PC-9 (cell line): ENCODE measurements at regions of chr22 and their contacts with region 1.

Region 1: DNA sequence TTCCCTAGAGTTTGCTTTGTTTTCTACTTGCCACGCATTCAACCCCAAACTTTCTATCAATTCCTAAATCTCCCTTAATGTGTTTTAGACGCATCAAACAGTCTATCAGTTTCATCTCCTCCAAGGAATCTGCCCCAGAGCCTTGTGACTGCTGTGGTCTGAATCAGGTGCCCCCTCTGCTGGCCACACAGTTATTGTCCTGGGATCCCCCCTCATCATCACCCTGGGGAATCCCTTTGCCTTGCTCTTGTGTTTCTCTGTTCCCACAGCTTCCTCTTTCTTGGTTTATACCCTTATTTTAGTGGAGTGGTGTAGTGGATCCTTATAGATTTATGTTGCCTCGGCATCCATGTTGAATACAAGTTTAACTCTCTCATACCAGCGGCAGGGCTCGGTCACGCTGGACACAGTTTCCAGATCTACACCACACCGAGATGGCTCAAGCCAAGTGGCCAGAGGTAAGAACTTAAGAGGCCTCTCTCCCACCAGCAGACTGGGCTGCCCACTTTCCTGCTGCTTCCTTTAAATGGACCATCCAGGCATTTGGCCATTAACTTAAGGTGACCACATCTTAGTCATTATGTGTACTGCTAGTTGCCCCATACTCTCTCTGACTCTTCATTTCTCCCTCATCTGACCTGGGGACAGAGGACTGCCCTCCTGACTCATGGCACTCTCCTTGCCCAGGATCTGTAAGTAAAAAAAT is 8.2 kb downstream of the UPB1 start:
- DNase-seq: peak; percentile 53 to 55
- H3K4me3 ChIP-seq: no peak overlapping the region
- H3K27ac ChIP-seq: no peak overlapping the region
- H3K4me1 ChIP-seq: peaks cover 59% of the 10 kb centered on the region
- H3K27me3 ChIP-seq: no peaks in the 10 kb centered on the region
- CTCF ChIP-seq: peak; percentile 74

Region 2: GRCh38 chr22:24423519-24424000 is 79.7 kb before region 1 on chr22:
- CTCF ChIA-PET with region 1: no interaction called
- POLR2A ChIA-PET with region 1: no interaction called
- intact Hi-C with region 1: loop called (anchors 1 kb)
- DNase-seq: peak in 1 of 2 experiments; percentile 57
- H3K4me3 ChIP-seq: peak overlapping the region; percentile 78; the same call in 1 of the 2 replicates
- H3K27ac ChIP-seq: no peak overlapping the region
- H3K4me1 ChIP-seq: no peaks in the 10 kb centered on the region
- H3K27me3 ChIP-seq: no peaks in the 10 kb centered on the region
- CTCF ChIP-seq: peak; percentile 75

Region 3: DNA sequence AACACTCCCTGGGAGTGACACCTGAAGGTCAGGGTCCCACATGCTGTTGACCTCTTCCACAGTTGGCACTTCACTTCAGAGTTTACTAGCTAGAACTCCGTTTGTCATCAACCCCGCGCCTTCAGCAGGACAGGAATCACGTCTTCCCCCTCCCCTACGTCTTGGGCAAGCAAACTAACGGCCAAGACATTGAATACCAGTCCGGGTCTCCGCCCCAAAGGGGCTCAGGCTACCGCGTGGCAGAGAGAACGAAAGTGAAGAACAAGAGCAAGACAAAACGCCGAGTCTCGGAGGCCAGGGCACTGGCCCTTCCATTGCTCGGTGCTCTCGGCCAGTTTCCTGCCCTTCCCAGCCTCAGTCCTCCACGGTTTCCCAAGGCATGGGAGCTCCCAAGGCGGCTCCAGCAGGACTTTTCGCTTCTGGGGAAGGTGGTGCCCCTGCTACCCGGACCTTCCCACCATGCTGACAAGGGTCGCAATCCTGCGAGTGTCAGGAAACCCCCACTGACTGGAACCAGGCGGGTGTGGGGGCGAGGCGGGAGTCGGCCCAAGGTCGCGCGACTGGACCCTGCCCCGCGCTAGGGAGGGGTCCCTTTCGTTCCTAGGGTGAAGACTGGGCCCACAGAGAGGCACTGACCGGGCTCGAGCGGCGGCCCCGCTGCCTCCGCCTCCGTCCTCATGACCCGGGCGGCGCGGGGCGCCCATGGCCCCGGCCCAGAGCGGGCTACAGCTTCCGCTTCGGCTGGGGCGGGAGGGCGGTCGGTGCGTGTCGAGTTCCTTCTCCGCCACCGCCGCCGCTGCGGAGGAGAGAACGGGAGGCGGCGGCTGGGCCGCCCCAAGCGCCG is 51.2 kb after region 1 on chr22 and contains the start of gene GUCD1:
- CTCF ChIA-PET with region 1: no interaction called
- POLR2A ChIA-PET with region 1: no interaction called
- intact Hi-C with region 1: no loop called
- DNase-seq: peak in 1 of 2 experiments; percentile 11
- H3K4me3 ChIP-seq: peak within 1 kb of the TSS; percentile 100
- H3K27ac ChIP-seq: peak within 1 kb of the TSS; percentile 75
- H3K4me1 ChIP-seq: peaks cover 20% of the 10 kb centered on the region
- H3K27me3 ChIP-seq: no peaks in the 10 kb centered on the region
- CTCF ChIP-seq: no peak
- total RNA-seq, gene GUCD1: 69.1 and 80.2 TPM in 2 replicates